HCT116 (cell line): ENCODE measurements at regions of chr17 and their contacts with region 1.

Region 1: DNA sequence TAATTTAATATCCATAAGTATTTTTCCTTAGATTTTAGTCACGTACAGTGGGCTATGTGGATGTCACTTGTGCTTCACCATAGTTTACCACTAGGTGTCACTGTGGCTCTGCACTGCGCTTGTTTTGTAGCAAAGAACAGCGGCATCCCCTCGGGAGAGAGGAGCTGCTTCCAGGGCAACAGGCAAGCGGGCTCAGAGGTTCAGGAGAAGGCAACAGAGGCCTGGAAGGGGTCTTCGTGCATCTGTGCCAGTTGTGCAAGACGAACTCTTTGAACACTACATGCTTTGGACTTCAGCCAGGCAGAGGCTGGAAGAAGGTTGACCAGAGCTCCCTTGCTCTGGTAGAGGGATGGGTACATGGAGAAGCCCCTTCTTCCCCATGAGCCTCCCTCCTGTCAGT is 20.6 kb downstream of the CYB561 start:
- DNase-seq: peak; percentile 78
- ATAC-seq: peak; percentile 98
- H3K4me3 ChIP-seq: no peak overlapping the region
- H3K27ac ChIP-seq: no peak overlapping the region
- H3K4me1 ChIP-seq: no peaks in the 10 kb centered on the region
- H3K27me3 ChIP-seq: no peaks in the 10 kb centered on the region
- CTCF ChIP-seq: peak; percentile 97 to 99 (median 98)
- POLR2A ChIP-seq: no peak
- RAD21 ChIP-seq: peak; percentile 100

Region 2: DNA sequence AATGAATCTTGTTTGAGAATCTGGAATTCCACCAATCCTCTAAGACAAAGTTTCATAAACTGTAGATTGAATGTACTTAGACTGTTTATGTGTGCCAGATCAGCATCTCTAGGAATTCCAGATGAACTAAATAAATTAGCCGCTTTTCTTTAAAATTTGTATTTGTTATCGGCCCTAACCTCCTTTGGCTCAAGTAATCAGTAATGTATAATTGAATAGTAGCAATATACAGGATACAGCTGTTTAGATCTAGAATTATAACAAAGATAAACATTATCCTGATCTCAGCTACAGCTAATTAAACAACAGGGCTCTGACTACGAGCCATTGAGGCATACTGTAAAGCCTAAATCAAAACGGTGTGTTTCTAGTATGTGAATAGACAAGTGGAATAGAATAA is 99.7 kb before region 1 on chr17:
- CTCF ChIA-PET with region 1: no interaction called
- POLR2A ChIA-PET with region 1: no interaction called
- RAD21 ChIA-PET with region 1: no interaction called
- intact Hi-C with region 1: no loop called
- DNase-seq: no peak
- ATAC-seq: no peak
- H3K4me3 ChIP-seq: no peak overlapping the region
- H3K27ac ChIP-seq: no peak overlapping the region
- H3K4me1 ChIP-seq: no peaks in the 10 kb centered on the region
- H3K27me3 ChIP-seq: no peaks in the 10 kb centered on the region
- CTCF ChIP-seq: no peak
- POLR2A ChIP-seq: no peak
- RAD21 ChIP-seq: no peak

Region 3: GRCh38 chr17:63445979-63446691 is 20.7 kb after region 1 on chr17 and contains the start of gene CYB561:
- CTCF ChIA-PET with region 1: interaction called, 18 read pairs
- POLR2A ChIA-PET with region 1: no interaction called
- RAD21 ChIA-PET with region 1: interaction called in 1 of 2 experiments, 3 read pairs
- intact Hi-C with region 1: no loop called
- DNase-seq: peak; percentile 47
- ATAC-seq: peak; percentile 90
- H3K4me3 ChIP-seq: peak within 1 kb of the TSS; percentile 85 to 86
- H3K27ac ChIP-seq: peak within 1 kb of the TSS; percentile 92
- H3K4me1 ChIP-seq: peaks cover 15 to 35% of the 10 kb centered on the region in 2 experiments
- H3K27me3 ChIP-seq: no peaks in the 10 kb centered on the region
- CTCF ChIP-seq: peak in 2 of 3 experiments; percentile 54 to 74; a peak in 4 of 6 replicates
- POLR2A ChIP-seq: peak; percentile 71
- RAD21 ChIP-seq: no peak
- total RNA-seq, gene CYB561: 67.6 TPM

Region 4: GRCh38 chr17:63571763-63572271 is 146.3 kb after region 1 on chr17:
- CTCF ChIA-PET with region 1: interaction called, 5 read pairs
- POLR2A ChIA-PET with region 1: no interaction called
- RAD21 ChIA-PET with region 1: no interaction called
- intact Hi-C with region 1: loop called (anchors 1 kb)
- DNase-seq: no peak
- ATAC-seq: no peak
- H3K4me3 ChIP-seq: no peak overlapping the region
- H3K27ac ChIP-seq: no peak overlapping the region
- H3K4me1 ChIP-seq: 0 out of 4 replicates have a peak, but pooled peaks cover 0 to 4% of the 10 kb centered on the region in 2 experiments
- H3K27me3 ChIP-seq: no peaks in the 10 kb centered on the region
- CTCF ChIP-seq: no peak
- POLR2A ChIP-seq: no peak
- RAD21 ChIP-seq: no peak

Region 5: DNA sequence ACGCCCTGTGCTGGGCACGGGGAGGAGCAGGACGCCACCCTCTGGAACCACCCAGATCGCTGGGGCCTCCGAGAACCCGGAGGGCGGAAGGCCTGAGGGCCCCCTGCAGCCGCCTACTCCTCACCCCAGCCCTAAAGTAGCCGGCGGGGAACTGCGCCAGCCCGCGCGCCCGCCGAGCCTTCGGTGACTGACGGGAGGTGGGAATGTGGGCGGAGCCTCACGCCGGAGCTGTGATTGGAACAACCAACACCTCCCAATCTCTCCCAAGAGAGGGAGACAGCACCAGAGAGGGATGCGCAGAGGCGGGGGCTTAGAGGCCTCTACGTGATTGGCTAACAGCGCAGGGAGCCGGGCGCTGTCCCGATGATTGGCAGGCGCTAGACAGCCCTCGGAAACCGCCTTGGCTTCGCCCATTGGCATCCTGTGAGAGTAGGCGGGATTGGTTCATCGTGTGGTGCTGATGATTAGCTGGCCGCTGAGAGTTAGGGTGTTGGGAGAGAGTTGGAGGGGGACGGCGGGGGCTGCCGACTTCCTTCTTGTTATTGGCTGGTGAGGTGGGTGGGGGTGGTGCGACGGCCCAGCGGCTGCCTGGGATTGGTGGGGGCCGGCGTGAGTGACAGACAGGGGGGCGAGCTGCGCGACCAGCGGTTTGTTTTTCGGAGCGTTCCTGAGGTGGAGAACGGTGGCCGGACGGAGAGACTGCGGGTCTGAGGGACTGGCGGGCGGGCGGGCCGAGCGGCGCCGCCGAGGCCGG is 196.5 kb after region 1 on chr17 and contains the start of gene MAP3K3:
- CTCF ChIA-PET with region 1: interaction called, 9 read pairs
- POLR2A ChIA-PET with region 1: interaction called, 4 read pairs
- RAD21 ChIA-PET with region 1: interaction called in 1 of 2 experiments, 10 read pairs
- intact Hi-C with region 1: no loop called
- DNase-seq: peak; percentile 100
- ATAC-seq: peak; percentile 89
- H3K4me3 ChIP-seq: peak within 1 kb of the TSS; percentile 80
- H3K27ac ChIP-seq: peak within 1 kb of the TSS; percentile 67
- H3K4me1 ChIP-seq: peaks cover 12 to 18% of the 10 kb centered on the region in 2 experiments; a peak in 3 of 4 replicates
- H3K27me3 ChIP-seq: no peaks in the 10 kb centered on the region
- CTCF ChIP-seq: 0 out of 6 replicates have a peak, but pooled peaks of 1 of the 3 experiments have one; percentile 10
- POLR2A ChIP-seq: peak; percentile 94
- RAD21 ChIP-seq: no peak
- total RNA-seq, gene MAP3K3: 18.5 TPM

Region 6: GRCh38 chr17:63697341-63698286 is 272.1 kb after region 1 on chr17:
- CTCF ChIA-PET with region 1: interaction called, 8 read pairs
- POLR2A ChIA-PET with region 1: no interaction called
- RAD21 ChIA-PET with region 1: no interaction called
- intact Hi-C with region 1: loop called (anchors 5 kb)
- DNase-seq: peak; percentile 27
- ATAC-seq: peak; percentile 71
- H3K4me3 ChIP-seq: no peak overlapping the region
- H3K27ac ChIP-seq: no peak overlapping the region
- H3K4me1 ChIP-seq: peaks cover 5 to 30% of the 10 kb centered on the region in 2 experiments
- H3K27me3 ChIP-seq: no peaks in the 10 kb centered on the region
- CTCF ChIP-seq: peak; percentile 85 to 89 (median 87)
- POLR2A ChIP-seq: no peak
- RAD21 ChIP-seq: peak; percentile 77

Region 7: GRCh38 chr17:64016231-64016784 is 590.8 kb after region 1 on chr17:
- CTCF ChIA-PET with region 1: no interaction called
- POLR2A ChIA-PET with region 1: no interaction called
- RAD21 ChIA-PET with region 1: no interaction called
- intact Hi-C with region 1: no loop called
- DNase-seq: no peak
- ATAC-seq: peak; percentile 80
- H3K4me3 ChIP-seq: no peak overlapping the region
- H3K27ac ChIP-seq: no peak overlapping the region
- H3K4me1 ChIP-seq: no peaks in the 10 kb centered on the region
- H3K27me3 ChIP-seq: no peaks in the 10 kb centered on the region
- CTCF ChIP-seq: peak; percentile 16 to 39 (median 34); a peak in 4 of 6 replicates
- POLR2A ChIP-seq: no peak
- RAD21 ChIP-seq: peak; percentile 56